Astrocyte of the cerebellum (primary cell): ENCODE measurements at regions of chr2 and their contacts with region 1.

Region 1: GRCh38 chr2:54834721-54835120 is 111.3 kb downstream of the EML6 start:
- DNase-seq: no peak
- H3K4me3 ChIP-seq: no peak overlapping the region
- CTCF ChIP-seq: no peak

Region 2: GRCh38 chr2:54879598-54880332 is 45.0 kb after region 1 on chr2:
- in situ Hi-C with region 1: loop called (anchors 5 kb)
- DNase-seq: no peak
- H3K4me3 ChIP-seq: no peak overlapping the region
- CTCF ChIP-seq: no peak